CD8-positive, alpha-beta T cell (primary cell): ENCODE measurements at regions of chr11 and their contacts with region 1.

Region 1: DNA sequence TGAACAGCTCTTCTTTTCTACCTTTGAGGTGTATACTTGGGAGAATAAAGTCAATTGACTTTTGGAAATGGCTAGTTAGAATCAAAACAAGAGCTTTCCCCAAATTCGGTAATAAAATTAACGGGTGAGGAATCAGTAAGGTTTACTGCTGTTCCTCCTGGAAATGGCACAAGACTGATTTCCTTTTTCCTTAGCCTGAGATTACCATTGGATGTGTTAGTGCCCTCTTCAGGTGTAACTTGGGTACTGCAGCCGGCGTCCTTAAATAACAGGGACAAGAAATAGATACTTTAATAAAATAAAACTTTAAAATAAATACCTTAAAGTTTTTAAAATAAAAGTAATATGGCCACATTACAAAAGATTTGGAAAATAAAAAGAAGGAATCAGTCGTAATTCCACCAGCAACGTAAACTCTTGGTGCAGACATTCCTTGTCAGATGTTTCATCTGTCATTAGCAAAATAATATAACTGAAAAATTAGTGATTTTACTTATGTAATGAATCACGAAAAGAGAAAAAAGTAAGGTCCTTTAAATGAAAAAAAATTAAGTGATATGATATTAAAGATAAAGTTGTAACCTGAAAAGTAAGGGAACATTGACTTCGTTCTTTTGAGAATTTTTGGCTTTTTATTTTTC is 29.7 kb downstream of the ZFTA start:
- DNase-seq: peak; percentile 25 to 76 (median 66)
- ATAC-seq: no peak
- H3K4me3 ChIP-seq: no peak overlapping the region
- H3K4me3 Mint-ChIP-seq: no peak overlapping the region
- H3K27ac ChIP-seq: no peak overlapping the region
- H3K27ac Mint-ChIP-seq: no peak overlapping the region
- H3K4me1 ChIP-seq: no peaks in the 10 kb centered on the region
- H3K4me1 Mint-ChIP-seq: peaks cover 2% of the 10 kb centered on the region
- H3K27me3 ChIP-seq: no peaks in the 10 kb centered on the region
- H3K27me3 Mint-ChIP-seq: no peaks in the 10 kb centered on the region
- CTCF ChIP-seq: peak; percentile 100

Region 2: GRCh38 chr11:63032457-63032856 is 706.4 kb before region 1 on chr11:
- CTCF ChIA-PET with region 1: interaction called, 3 read pairs
- POLR2A ChIA-PET with region 1: no interaction called
- intact Hi-C with region 1: loop called in 1 of 2 experiments (anchors 2 kb)
- DNase-seq: no peak
- ATAC-seq: no peak
- H3K4me3 ChIP-seq: no peak overlapping the region
- H3K4me3 Mint-ChIP-seq: no peak overlapping the region
- H3K27ac ChIP-seq: no peak overlapping the region
- H3K27ac Mint-ChIP-seq: no peak overlapping the region
- H3K4me1 ChIP-seq: no peaks in the 10 kb centered on the region
- H3K4me1 Mint-ChIP-seq: no peaks in the 10 kb centered on the region
- H3K27me3 ChIP-seq: peaks cover 0 to 3% of the 10 kb centered on the region in 2 experiments
- H3K27me3 Mint-ChIP-seq: peaks cover 30% of the 10 kb centered on the region
- CTCF ChIP-seq: no peak

Region 3: GRCh38 chr11:63652671-63653070 is 86.2 kb before region 1 on chr11:
- CTCF ChIA-PET with region 1: interaction called, 13 read pairs
- POLR2A ChIA-PET with region 1: no interaction called
- intact Hi-C with region 1: no loop called
- DNase-seq: no peak
- ATAC-seq: no peak
- H3K4me3 ChIP-seq: no peak overlapping the region
- H3K4me3 Mint-ChIP-seq: no peak overlapping the region
- H3K27ac ChIP-seq: no peak overlapping the region
- H3K27ac Mint-ChIP-seq: peak overlapping the region; percentile 10
- H3K4me1 ChIP-seq: peaks cover 9% of the 10 kb centered on the region
- H3K4me1 Mint-ChIP-seq: peaks cover 9% of the 10 kb centered on the region
- H3K27me3 ChIP-seq: no peaks in the 10 kb centered on the region
- H3K27me3 Mint-ChIP-seq: no peaks in the 10 kb centered on the region
- CTCF ChIP-seq: no peak

Region 4: GRCh38 chr11:63671322-63672155 is 67.3 kb before region 1 on chr11 and contains the start of gene ATL3:
- CTCF ChIA-PET with region 1: interaction called, 17 read pairs
- POLR2A ChIA-PET with region 1: no interaction called
- intact Hi-C with region 1: loop called (anchors 1 to 2 kb)
- DNase-seq: peak; percentile 87 to 98 (median 96)
- ATAC-seq: peak; percentile 95
- H3K4me3 ChIP-seq: peak within 1 kb of the TSS; percentile 79 to 91
- H3K4me3 Mint-ChIP-seq: peak within 1 kb of the TSS; percentile 86
- H3K27ac ChIP-seq: peak within 1 kb of the TSS; percentile 65 to 74
- H3K27ac Mint-ChIP-seq: peak within 1 kb of the TSS; percentile 87
- H3K4me1 ChIP-seq: peaks cover 19% of the 10 kb centered on the region
- H3K4me1 Mint-ChIP-seq: peaks cover 29% of the 10 kb centered on the region
- H3K27me3 ChIP-seq: no peaks in the 10 kb centered on the region
- H3K27me3 Mint-ChIP-seq: no peaks in the 10 kb centered on the region
- CTCF ChIP-seq: no peak
- total RNA-seq, gene ATL3: 11.6 to 11.8 TPM

Region 5: DNA sequence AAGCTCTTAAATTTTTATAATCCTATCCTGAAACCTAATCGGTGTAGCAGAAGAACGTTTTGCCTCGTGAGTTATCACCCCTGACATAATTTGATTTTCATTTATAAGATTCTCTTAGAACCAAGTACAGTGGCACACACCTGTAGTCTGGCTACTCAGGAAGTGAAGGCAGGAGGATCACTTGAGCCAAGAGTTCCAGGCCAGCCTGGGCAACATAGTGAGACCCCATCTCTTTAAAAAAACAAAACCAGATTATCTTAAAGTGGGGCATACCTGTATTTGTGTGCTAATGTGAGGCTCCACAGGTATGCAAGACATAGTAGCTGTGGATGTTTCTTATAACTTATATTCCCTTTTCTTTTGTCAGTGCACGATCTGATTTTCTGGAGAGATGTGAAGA is 10.8 kb after region 1 on chr11:
- CTCF ChIA-PET with region 1: interaction called, 10 read pairs
- POLR2A ChIA-PET with region 1: interaction called, 3 read pairs
- intact Hi-C with region 1: no loop called
- DNase-seq: no peak
- ATAC-seq: no peak
- H3K4me3 ChIP-seq: no peak overlapping the region
- H3K4me3 Mint-ChIP-seq: no peak overlapping the region
- H3K27ac ChIP-seq: no peak overlapping the region
- H3K27ac Mint-ChIP-seq: no peak overlapping the region
- H3K4me1 ChIP-seq: no peaks in the 10 kb centered on the region
- H3K4me1 Mint-ChIP-seq: no peaks in the 10 kb centered on the region
- H3K27me3 ChIP-seq: no peaks in the 10 kb centered on the region
- H3K27me3 Mint-ChIP-seq: no peaks in the 10 kb centered on the region
- CTCF ChIP-seq: no peak

Region 6: GRCh38 chr11:64165849-64166635 is 427.2 kb after region 1 on chr11 and contains the start of gene MACROD1:
- CTCF ChIA-PET with region 1: no interaction called
- POLR2A ChIA-PET with region 1: no interaction called
- intact Hi-C with region 1: no loop called
- DNase-seq: peak; percentile 38 to 88 (median 77)
- ATAC-seq: peak; percentile 95
- H3K4me3 ChIP-seq: peak within 1 kb of the TSS; percentile 62 to 78
- H3K4me3 Mint-ChIP-seq: peak within 1 kb of the TSS; percentile 91
- H3K27ac ChIP-seq: peak within 1 kb of the TSS in 1 of 2 experiments; percentile 34
- H3K27ac Mint-ChIP-seq: peak within 1 kb of the TSS; percentile 76
- H3K4me1 ChIP-seq: peaks cover 16% of the 10 kb centered on the region
- H3K4me1 Mint-ChIP-seq: peaks cover 17% of the 10 kb centered on the region
- H3K27me3 ChIP-seq: no peaks in the 10 kb centered on the region
- H3K27me3 Mint-ChIP-seq: no peaks in the 10 kb centered on the region
- CTCF ChIP-seq: no peak
- total RNA-seq, gene MACROD1: 4.5 to 6.8 TPM